K562 (cell line): ENCODE measurements at regions of chr1 and their contacts with region 1.

Region 1: DNA sequence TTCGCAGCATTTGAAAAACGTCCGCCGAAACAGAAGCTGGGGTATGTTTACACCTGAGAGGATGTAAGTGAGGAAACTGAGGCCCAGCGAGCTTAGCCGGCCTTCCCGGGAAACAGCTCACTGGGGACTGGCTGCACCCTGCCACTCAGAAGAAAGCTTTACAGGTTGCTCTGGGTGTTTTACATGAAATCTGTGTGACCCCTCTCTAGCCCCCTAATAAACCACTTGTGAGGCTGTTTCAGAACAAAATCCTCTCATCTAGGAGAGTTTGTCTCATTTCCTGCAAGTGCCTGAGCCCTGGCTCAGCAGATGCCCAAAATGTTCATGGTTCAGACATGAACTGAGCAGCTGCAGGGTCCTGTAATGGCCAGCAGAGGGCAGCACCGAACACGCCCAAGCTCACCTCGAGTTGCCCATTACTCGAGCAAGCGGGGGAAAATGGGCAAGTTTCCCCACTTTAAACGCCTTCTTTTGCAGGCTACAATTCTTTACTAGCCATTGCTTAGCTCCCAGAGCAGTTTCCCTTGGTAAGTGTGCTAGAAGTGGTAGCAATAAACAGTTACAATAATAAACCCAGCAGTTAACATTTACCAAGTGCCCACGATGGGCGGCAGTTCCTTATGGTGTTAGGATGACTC is 76.4 kb downstream of the FHAD1 start:
- DNase-seq: peak; percentile 73 to 89 (median 84)
- ATAC-seq: peak; percentile 93
- H3K4me3 ChIP-seq: peak overlapping the region; percentile 24
- H3K27ac ChIP-seq: no peak overlapping the region; the same call in 2 of the 3 replicates
- H3K4me1 ChIP-seq: peaks cover 23 to 27% of the 10 kb centered on the region in 2 experiments
- H3K27me3 ChIP-seq: no peaks in the 10 kb centered on the region; a peak in 2 of 5 replicates
- CTCF ChIP-seq: peak; percentile 90 to 99 (median 94)
- EP300 ChIP-seq: no peak
- POLR2A ChIP-seq: no peak
- RAD21 ChIP-seq: peak; percentile 90

Region 2: GRCh38 chr1:15282038-15282437 is 41.4 kb before region 1 on chr1:
- CTCF ChIA-PET with region 1: no interaction called
- POLR2A ChIA-PET with region 1: no interaction called
- in situ Hi-C with region 1: no loop called
- intact Hi-C with region 1: no loop called
- DNase-seq: no peak
- ATAC-seq: no peak
- H3K4me3 ChIP-seq: no peak overlapping the region
- H3K27ac ChIP-seq: no peak overlapping the region
- H3K4me1 ChIP-seq: no peaks in the 10 kb centered on the region; a peak in 1 of 5 replicates
- H3K27me3 ChIP-seq: peaks cover 24 to 50% of the 10 kb centered on the region in 2 experiments
- CTCF ChIP-seq: no peak
- EP300 ChIP-seq: no peak
- POLR2A ChIP-seq: no peak
- RAD21 ChIP-seq: no peak

Region 3: GRCh38 chr1:15364740-15365139 is 41.3 kb after region 1 on chr1:
- CTCF ChIA-PET with region 1: interaction called, 7 read pairs
- POLR2A ChIA-PET with region 1: no interaction called
- in situ Hi-C with region 1: no loop called
- intact Hi-C with region 1: loop called (anchors 2 kb)
- DNase-seq: peak in 3 of 4 experiments; percentile 23 to 54 (median 28)
- ATAC-seq: peak; percentile 76
- H3K4me3 ChIP-seq: no peak overlapping the region
- H3K27ac ChIP-seq: no peak overlapping the region
- H3K4me1 ChIP-seq: no peaks in the 10 kb centered on the region; a peak in 2 of 5 replicates
- H3K27me3 ChIP-seq: peaks cover 6 to 34% of the 10 kb centered on the region in 2 experiments
- CTCF ChIP-seq: peak; percentile 49 to 63 (median 52); a peak in 5 of 6 replicates
- EP300 ChIP-seq: no peak
- POLR2A ChIP-seq: no peak
- RAD21 ChIP-seq: peak; percentile 53 to 61

Region 4: DNA sequence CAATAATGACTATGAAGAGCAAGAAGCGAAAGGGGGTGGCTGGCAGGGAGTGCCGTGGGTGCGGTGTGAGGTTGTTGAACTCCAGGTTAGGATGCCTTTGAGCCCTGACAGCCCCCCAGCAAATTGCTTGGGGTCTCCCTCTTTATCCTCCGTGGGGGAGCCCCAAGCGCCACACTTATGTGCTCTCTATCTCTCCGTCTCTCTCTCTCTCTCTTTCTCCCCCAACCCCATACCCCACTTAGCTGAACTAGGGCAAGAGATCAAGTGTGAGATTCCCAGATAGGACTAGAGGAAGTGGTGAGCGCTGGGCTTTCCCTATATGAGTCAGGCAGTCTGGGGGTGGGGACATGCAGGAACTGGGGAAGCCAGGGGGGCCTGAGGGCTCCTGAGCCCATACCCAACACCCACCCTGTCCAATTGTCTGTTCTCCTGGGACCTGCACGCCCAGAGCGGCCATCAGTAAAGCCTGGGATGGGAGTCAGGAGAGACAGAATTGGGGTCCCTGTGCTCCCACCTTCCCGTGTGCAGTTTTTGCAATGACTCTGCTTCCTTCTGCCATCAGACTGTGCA is 94.0 kb after region 1 on chr1:
- CTCF ChIA-PET with region 1: no interaction called
- POLR2A ChIA-PET with region 1: no interaction called
- in situ Hi-C with region 1: no loop called
- intact Hi-C with region 1: loop called (anchors 5 kb)
- DNase-seq: peak; percentile 62 to 79 (median 70)
- ATAC-seq: peak; percentile 82
- H3K4me3 ChIP-seq: no peak overlapping the region
- H3K27ac ChIP-seq: peak overlapping the region; percentile 33; the same call in 1 of the 3 replicates
- H3K4me1 ChIP-seq: peaks cover 23 to 55% of the 10 kb centered on the region in 2 experiments
- H3K27me3 ChIP-seq: no peaks in the 10 kb centered on the region
- CTCF ChIP-seq: no peak
- EP300 ChIP-seq: peak; percentile 65; the same call in 1 of the 2 replicates
- POLR2A ChIP-seq: no peak
- RAD21 ChIP-seq: no peak

Region 5: DNA sequence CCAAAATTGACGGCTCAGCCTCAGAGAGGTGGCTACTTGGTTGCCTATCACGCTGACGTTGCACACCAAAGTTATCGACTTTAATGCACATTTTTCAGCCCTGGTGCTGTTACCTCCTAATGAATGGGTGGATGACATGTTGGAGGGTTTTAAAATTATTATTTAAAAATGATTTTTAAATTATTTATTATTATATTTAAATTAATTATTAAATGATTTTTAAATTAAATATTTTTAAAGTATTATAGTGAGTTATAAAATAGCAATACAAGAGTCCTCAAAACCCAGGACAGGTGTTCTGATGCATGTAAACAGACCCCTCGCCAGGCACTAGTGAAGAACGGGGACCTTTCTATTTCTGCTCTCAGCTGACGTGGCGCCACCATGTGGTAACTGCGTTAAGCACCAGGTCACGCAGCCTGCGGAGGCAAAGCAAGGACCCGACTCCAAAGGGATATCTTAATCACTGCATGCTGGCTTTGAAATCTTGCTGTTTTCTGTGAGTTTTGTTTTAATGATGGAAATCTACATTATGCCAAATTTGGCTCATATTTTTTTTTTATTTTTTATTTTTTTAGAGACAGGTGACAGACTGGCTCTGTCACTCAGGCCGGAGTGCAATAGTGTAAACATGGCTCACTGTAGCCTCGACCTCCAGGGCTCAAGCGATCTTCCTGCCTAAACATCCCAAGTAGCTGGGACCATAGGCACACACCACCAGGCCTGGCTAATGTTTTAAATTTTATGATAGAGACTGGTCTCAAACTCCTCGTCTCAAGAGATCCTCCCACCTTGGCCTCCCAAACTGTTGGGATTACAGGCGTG is 177.9 kb after region 1 on chr1:
- CTCF ChIA-PET with region 1: interaction called, 8 read pairs
- POLR2A ChIA-PET with region 1: no interaction called
- in situ Hi-C with region 1: no loop called
- intact Hi-C with region 1: loop called (anchors 5 kb)
- DNase-seq: peak; percentile 80 to 84 (median 82)
- ATAC-seq: peak; percentile 98
- H3K4me3 ChIP-seq: no peak overlapping the region
- H3K27ac ChIP-seq: no peak overlapping the region
- H3K4me1 ChIP-seq: no peaks in the 10 kb centered on the region
- H3K27me3 ChIP-seq: no peaks in the 10 kb centered on the region
- CTCF ChIP-seq: peak; percentile 85 to 89 (median 88)
- EP300 ChIP-seq: no peak
- POLR2A ChIP-seq: no peak
- RAD21 ChIP-seq: peak; percentile 77 to 84

Region 6: DNA sequence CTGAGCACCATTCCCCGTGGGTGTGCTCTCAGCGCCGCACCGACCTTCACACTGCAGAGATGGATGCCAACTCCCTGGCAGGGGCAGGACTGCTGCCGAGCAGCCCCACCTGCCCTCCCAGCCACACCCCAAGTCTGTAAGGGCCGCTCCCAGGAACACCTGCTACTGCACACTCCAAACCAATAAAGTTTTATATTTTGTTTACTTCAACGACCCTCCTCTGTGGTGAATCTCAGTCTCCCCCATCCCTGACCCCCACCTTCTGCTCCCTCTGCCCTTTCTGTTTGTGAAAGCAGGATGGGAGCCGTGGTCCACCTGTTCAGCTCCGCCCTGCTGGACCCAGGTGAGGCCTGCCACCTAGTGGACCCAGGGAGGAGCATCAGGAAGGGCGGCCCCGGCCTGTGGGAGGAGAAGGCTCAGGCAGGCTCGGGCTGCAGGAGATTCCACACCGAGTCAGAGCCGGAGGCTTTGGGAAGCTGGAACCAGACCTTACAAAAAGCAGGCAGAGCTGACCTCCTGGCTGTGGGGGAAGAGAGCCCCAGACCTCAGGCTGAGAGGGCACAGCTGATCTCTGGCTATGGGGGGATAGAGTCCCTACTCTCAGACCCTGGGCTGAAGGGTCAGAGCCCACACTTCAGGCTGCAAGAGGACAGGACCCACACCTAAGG is 417.8 kb after region 1 on chr1:
- CTCF ChIA-PET with region 1: no interaction called
- POLR2A ChIA-PET with region 1: no interaction called
- in situ Hi-C with region 1: no loop called
- intact Hi-C with region 1: loop called (anchors 1 kb)
- DNase-seq: peak; percentile 88 to 94 (median 91)
- ATAC-seq: peak; percentile 97
- H3K4me3 ChIP-seq: no peak overlapping the region
- H3K27ac ChIP-seq: no peak overlapping the region
- H3K4me1 ChIP-seq: peaks cover 3 to 55% of the 10 kb centered on the region in 2 experiments; a peak in 4 of 5 replicates
- H3K27me3 ChIP-seq: no peaks in the 10 kb centered on the region
- CTCF ChIP-seq: peak; percentile 96 to 98 (median 97)
- EP300 ChIP-seq: no peak
- POLR2A ChIP-seq: no peak
- RAD21 ChIP-seq: peak; percentile 88 to 97